ENCODE measurements at regions of chr22 and their contacts with region 1.

Region 1: DNA sequence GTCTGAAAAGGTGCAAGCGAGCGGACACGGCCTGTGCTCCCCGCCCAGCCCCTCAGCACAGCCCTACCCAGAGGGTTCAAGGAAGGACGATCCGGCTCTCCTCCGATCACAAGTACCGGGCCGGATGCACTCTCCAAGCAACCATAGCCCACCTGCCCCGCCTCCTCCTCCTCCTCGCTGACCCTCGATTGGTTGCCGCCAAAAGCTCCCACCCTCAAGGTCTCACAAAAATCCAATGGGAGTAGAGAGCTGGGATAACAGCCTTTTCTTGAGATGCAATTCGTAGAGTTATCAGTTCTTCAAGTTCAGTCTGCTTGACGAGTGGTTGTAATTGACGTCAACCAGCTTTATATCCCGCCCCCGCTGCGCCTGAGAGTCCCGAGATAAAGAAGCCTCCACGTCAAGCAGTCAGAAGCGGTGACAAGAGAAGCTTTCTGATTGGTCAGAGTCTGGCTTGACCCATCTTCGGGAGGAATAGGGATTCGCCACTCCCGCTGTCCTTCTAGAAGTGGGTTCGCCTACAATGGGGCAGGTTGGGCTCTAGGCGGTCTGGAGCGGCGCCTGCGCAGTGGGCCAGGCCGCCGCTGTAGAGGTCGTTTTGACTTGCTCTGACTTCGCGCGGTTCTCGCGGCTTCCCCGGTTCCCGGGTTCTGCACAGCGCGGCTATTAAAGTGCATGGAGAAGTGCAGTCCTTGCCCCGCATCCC is at the start of gene IFT27:
- DNase-seq: peak; percentile 99 to 100 (median 100)
- H3K4me3 ChIP-seq: peak within 1 kb of the TSS in 3 of 4 donors; percentile 13 to 94 (median 71)
- H3K27ac ChIP-seq: peak within 1 kb of the TSS in 3 of 5 donors; percentile 70 to 90 (median 76)
- H3K4me1 ChIP-seq: peaks cover 8 to 9% of the 10 kb centered on the region in 2 donors
- H3K27me3 ChIP-seq: no peaks in the 10 kb centered on the region
- CTCF ChIP-seq: no peak
- POLR2A ChIP-seq: peak in 1 of 2 donors; percentile 59
- total RNA-seq, gene IFT27: 9.4 to 43.8 (median 36.7) TPM

Region 2: GRCh38 chr22:36546092-36546804 is 229.9 kb before region 1 on chr22:
- intact Hi-C with region 1: loop called in 1 of 2 experiments (anchors 5 kb)
- DNase-seq: peak; percentile 31 to 67 (median 48)
- H3K4me3 ChIP-seq: no peak overlapping the region
- H3K27ac ChIP-seq: no peak overlapping the region
- H3K4me1 ChIP-seq: no peaks in the 10 kb centered on the region
- H3K27me3 ChIP-seq: peaks cover 2% of the 10 kb centered on the region
- CTCF ChIP-seq: peak; percentile 12 to 57 (median 42)
- POLR2A ChIP-seq: no peak

Region 3: DNA sequence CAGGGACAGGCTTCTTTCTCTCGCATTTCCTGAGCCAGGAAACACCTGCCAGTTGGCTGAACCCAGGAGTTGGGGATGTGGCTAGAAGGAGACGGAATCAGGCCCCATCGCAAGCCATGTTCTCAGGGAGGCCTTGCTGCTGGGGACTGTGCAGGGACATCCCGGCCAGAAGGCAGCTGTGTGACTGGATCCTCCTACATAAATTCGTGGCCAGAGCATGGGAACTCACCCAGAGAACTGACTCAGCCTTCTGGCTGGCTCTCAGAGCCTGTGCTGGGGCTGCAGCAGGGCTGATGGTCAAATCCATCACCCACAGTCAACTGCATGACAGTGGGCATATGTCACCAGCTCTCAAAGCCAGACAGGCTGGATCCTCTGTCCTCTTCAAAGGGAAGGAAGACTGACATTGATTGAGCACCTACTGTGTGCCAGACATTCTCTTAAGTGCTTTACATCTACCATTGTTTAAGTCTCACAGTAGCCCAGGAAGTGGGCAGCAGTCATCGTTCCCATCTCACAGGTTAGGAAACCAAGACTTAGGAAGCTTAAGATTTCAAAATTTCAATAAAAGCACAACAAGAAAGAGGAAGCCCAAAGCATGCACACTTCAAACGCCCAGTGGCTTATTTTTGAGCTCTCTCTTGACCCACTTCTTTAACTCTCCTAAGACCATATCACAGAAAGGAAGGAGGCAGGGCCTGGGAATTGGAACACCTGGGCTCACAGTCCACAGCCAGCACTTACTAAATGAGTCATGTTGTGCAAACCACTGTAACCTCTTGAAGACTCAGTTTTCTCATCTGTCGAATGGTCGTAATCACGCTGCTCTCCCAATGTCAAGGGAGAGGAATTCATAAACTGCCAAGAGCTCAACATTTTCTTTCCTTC is 41.7 kb before region 1 on chr22:
- intact Hi-C with region 1: no loop called
- DNase-seq: peak; percentile 42 to 71 (median 55)
- H3K4me3 ChIP-seq: no peak overlapping the region
- H3K27ac ChIP-seq: no peak overlapping the region
- H3K4me1 ChIP-seq: peaks cover 0 to 3% of the 10 kb centered on the region in 2 donors
- H3K27me3 ChIP-seq: no peaks in the 10 kb centered on the region
- CTCF ChIP-seq: no peak
- POLR2A ChIP-seq: no peak

Measured in adrenal gland (tissue), 19 donors.